Activated naive CD4-positive, alpha-beta T cell treated with anti-CD3 and anti-CD28 coated beads, Interleukin-2, amount 10 ng/mL, durations not matched to agents 7 days and 5 days (primary cell): ENCODE measurements at regions of chr1 and their contacts with region 1.

Region 1: GRCh38 chr1:84753516-84754385 is 63.5 kb upstream of the SSX2IP start:
- DNase-seq: peak; percentile 87
- H3K4me3 Mint-ChIP-seq: no peak overlapping the region
- H3K27ac Mint-ChIP-seq: no peak overlapping the region
- H3K4me1 Mint-ChIP-seq: peaks cover 5% of the 10 kb centered on the region
- H3K27me3 Mint-ChIP-seq: peaks cover 21% of the 10 kb centered on the region

Region 2: DNA sequence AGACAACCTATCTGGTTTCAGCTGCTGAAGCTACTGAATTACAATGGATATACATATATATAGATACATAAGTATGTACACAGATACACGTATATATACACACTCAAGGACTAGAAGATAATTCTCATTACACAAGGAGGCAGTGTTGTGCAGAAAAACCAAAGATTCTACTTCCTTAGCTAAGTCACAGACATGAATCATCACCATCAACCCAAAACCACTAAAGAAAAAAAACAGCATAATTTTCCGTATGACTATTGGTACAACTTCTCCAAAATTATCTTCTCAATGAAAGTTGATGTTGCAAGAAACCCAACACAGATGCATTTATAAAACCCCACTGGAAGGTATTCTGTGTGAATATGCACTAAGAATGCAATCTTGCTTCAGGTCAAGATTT is 311.5 kb before region 1 on chr1:
- CTCF ChIA-PET with region 1: interaction called, 29 read pairs
- DNase-seq: no peak
- H3K4me3 Mint-ChIP-seq: no peak overlapping the region
- H3K27ac Mint-ChIP-seq: peak overlapping the region; percentile 85
- H3K4me1 Mint-ChIP-seq: peaks cover 22% of the 10 kb centered on the region
- H3K27me3 Mint-ChIP-seq: peaks cover 13% of the 10 kb centered on the region

Region 3: DNA sequence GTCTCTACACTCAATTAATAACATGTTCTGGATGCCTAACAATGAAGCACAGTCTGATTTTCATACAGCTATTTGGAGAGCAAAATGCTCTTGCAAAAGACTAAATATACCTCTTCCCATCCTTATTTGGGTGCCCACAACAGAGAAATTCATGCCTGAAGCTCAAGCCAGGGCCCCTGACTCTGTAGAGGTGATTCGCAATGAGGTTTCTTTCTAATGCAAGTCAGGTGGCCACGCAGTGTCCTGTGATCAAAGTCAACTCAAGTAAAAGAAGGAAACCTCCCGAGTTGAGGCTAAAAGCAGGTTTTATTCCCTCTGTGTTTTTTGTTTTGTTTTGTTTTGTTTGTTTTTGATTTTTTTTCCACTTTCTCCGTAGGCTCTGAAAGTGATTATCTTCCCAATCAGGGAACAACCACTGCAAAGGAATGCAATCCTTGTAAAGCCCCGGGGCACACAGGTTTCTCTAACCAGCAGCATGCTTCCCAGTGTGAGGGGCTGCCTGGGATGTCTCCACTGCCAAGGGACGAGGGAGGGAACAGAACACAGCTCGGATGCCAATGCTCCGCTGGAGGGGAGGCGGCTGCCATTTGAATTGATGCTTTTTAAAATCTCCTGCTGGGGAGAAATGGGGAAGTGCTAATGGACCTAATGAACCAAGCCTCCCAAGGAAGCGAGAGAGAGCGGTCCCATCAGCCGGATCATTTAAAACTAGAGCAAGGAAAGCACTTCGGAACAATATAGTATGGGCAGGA is 10.3 kb after region 1 on chr1:
- CTCF ChIA-PET with region 1: interaction called, 11 read pairs
- DNase-seq: no peak
- H3K4me3 Mint-ChIP-seq: no peak overlapping the region
- H3K27ac Mint-ChIP-seq: no peak overlapping the region
- H3K4me1 Mint-ChIP-seq: peaks cover 2% of the 10 kb centered on the region
- H3K27me3 Mint-ChIP-seq: peaks cover 38% of the 10 kb centered on the region

Region 4: GRCh38 chr1:84772428-84772943 is 18.7 kb after region 1 on chr1:
- CTCF ChIA-PET with region 1: interaction called, 15 read pairs
- DNase-seq: peak; percentile 84
- H3K4me3 Mint-ChIP-seq: no peak overlapping the region
- H3K27ac Mint-ChIP-seq: no peak overlapping the region
- H3K4me1 Mint-ChIP-seq: no peaks in the 10 kb centered on the region
- H3K27me3 Mint-ChIP-seq: peaks cover 29% of the 10 kb centered on the region

Region 5: GRCh38 chr1:84959294-84959693 is 205.5 kb after region 1 on chr1:
- CTCF ChIA-PET with region 1: no interaction called
- DNase-seq: peak; percentile 51
- H3K4me3 Mint-ChIP-seq: no peak overlapping the region
- H3K27ac Mint-ChIP-seq: no peak overlapping the region
- H3K4me1 Mint-ChIP-seq: peaks cover 14% of the 10 kb centered on the region
- H3K27me3 Mint-ChIP-seq: no peaks in the 10 kb centered on the region